Panc1 (cell line): ENCODE measurements at regions of chr17 and their contacts with region 1.

Region 1: DNA sequence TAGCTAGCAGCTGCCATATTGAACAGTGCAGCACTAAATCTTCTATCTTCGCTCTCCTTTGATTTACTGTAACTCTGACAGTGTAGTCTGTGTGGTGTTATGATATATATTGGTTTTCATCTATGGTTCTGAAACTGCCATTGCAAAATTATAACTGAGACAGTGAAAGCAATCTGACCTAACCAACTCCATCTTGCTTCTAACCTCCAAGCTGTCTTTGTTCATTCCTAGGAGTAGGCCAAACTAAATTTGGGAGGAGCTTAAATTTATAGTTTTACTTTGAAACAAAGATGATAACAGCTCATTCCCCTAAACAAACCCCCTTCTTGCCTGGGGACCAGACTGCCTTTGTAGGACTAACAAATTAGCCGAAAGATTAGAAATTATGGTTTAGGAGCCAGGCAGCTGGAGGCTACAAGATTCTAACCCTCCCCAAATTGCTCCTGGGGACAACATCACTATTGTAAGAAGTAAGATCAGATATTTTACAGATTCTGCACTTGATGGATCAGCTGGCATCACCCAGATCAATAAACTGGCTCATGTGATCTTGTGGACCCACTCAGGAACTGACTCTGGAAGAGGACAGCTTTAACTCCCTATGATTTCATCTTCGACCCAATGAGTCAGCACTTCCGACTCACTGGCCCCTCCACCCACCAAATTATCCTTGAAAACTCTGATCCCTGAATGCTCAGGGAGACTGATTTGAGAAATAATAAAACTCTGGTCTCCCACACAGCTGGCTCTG is 47.0 kb upstream of the FBXO47 start:
- DNase-seq: no peak
- ATAC-seq: no peak
- H3K4me3 ChIP-seq: no peak overlapping the region
- H3K27ac ChIP-seq: no peak overlapping the region
- H3K4me1 ChIP-seq: no peaks in the 10 kb centered on the region
- H3K27me3 ChIP-seq: no peaks in the 10 kb centered on the region
- CTCF ChIP-seq: no peak

Region 2: DNA sequence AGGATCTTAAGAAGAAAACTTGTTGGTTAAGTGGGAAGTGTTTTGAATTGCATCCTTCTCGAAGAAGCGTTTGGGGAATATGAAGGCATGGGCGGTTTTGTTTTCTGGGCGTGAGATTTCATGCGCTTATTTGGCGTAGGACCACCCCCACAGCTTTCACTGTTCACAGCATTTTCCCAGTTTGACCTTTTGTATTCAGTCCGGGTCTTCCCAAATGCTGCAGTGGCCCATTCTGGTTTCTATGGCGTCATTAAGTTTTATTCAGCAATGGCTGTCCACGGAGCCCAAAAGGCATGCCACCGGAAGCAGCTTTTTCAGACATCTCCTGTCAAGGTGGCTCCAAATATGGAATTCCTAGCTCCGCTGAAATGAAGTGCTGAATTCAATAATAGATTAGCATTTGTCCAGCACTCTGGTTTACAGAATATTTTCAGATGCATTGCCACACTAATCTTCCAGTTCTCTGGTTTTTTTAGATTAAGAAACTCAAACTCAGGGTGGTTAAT is 43.5 kb after region 1 on chr17:
- CTCF ChIA-PET with region 1: no interaction called
- POLR2A ChIA-PET with region 1: interaction called, 10 read pairs
- in situ Hi-C with region 1: no loop called
- intact Hi-C with region 1: no loop called
- DNase-seq: no peak
- ATAC-seq: no peak
- H3K4me3 ChIP-seq: peak overlapping the region; percentile 67 to 68
- H3K27ac ChIP-seq: peak overlapping the region; percentile 71; the same call in 1 of the 2 replicates
- H3K4me1 ChIP-seq: no peaks in the 10 kb centered on the region
- H3K27me3 ChIP-seq: no peaks in the 10 kb centered on the region
- CTCF ChIP-seq: no peak